ENCODE measurements at regions of chr18 and their contacts with region 1.

Region 1: GRCh38 chr18:55405893-55406406 is 182.0 kb downstream of the TCF4 start:
- DNase-seq: peak; percentile 93

Region 2: GRCh38 chr18:55589625-55590291 is 183.8 kb after region 1 on chr18:
- intact Hi-C with region 1: loop called (anchors 5 to 10 kb)
- DNase-seq: peak; percentile 99

Region 3: GRCh38 chr18:55713707-55714106 is 307.8 kb after region 1 on chr18:
- intact Hi-C with region 1: no loop called
- DNase-seq: no peak

Region 4: GRCh38 chr18:55833543-55833942 is 427.6 kb after region 1 on chr18:
- intact Hi-C with region 1: no loop called
- DNase-seq: no peak

Region 5: DNA sequence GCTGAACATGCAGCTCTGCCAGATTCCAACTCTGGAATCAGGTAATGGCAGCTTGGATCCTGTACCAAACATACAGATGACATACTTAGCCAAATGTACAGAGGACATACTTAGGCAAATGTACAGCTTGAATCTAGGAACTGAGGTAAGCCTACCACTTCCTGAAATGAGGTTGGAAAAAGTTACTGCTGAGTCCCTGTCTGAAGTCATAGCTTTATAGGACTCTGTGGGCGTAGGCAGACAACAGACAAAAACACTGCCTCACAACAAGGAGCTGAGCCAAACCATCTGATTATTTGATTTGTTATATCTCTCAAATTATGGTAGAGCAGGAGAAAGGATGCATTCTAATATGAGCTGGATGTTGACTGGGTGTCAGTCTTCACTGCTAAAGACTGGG is 472.3 kb after region 1 on chr18:
- intact Hi-C with region 1: loop called in 1 of 2 experiments (anchors 5 kb)
- DNase-seq: no peak